ENCODE measurements at regions of chr1 and their contacts with region 1.

Region 1: DNA sequence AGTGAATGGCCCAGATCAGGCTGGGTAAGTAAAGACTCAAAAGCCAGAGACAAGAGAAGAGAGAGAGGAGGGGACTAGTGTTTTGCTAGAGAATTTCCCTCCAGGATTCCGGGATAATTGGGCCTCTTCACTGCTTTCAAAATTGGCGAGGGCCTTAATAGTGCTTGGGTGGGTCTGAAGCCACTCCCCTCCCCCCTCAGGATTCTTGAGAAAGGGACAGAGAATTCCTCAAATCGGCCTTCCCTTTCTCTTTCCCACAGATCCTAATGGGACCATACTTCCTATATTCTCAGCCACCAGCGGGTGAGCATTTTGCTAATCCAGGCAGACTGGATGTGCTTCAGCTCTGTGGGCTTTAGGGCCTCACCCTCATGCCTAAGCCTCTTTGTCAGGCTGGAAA is 11.9 kb downstream of the SFN start:
- DNase-seq: no peak
- H3K4me3 ChIP-seq: no peak overlapping the region
- H3K27ac ChIP-seq: peak overlapping the region; percentile 28
- H3K4me1 ChIP-seq: peaks cover 43% of the 10 kb centered on the region
- H3K27me3 ChIP-seq: no peaks in the 10 kb centered on the region
- CTCF ChIP-seq: no peak

Region 2: GRCh38 chr1:26787706-26788514 is 87.0 kb before region 1 on chr1 and contains the start of gene PIGV:
- CTCF ChIA-PET with region 1: interaction called, 3 read pairs
- POLR2A ChIA-PET with region 1: interaction called, 8 read pairs
- intact Hi-C with region 1: loop called (anchors 1 kb)
- DNase-seq: peak in 1 of 2 experiments; percentile 84
- H3K4me3 ChIP-seq: peak within 1 kb of the TSS; percentile 93
- H3K27ac ChIP-seq: peak within 1 kb of the TSS; percentile 92
- H3K4me1 ChIP-seq: peaks cover 52% of the 10 kb centered on the region
- H3K27me3 ChIP-seq: no peaks in the 10 kb centered on the region
- CTCF ChIP-seq: no peak
- total RNA-seq, gene PIGV: 30.8 and 31.9 TPM in 2 replicates